Uterus (tissue), 4 donors: ENCODE measurements at regions of chr2 and their contacts with region 1.

Region 1: GRCh38 chr2:55718165-55719008 is 24.7 kb upstream of the PNPT1 start:
- DNase-seq: peak; percentile 39 to 58
- H3K4me3 ChIP-seq: no peak overlapping the region
- H3K27ac ChIP-seq: no peak overlapping the region
- H3K4me1 ChIP-seq: no peaks in the 10 kb centered on the region
- H3K27me3 ChIP-seq: no peaks in the 10 kb centered on the region
- CTCF ChIP-seq: peak; percentile 63 to 79 (median 73)
- POLR2A ChIP-seq: no peak

Region 2: GRCh38 chr2:56009758-56010458 is 291.5 kb after region 1 on chr2:
- intact Hi-C with region 1: loop called (anchors 10 kb)
- DNase-seq: no peak
- H3K4me3 ChIP-seq: no peak overlapping the region
- H3K27ac ChIP-seq: no peak overlapping the region
- H3K4me1 ChIP-seq: peaks cover 0 to 6% of the 10 kb centered on the region in 2 donors
- H3K27me3 ChIP-seq: no peaks in the 10 kb centered on the region
- CTCF ChIP-seq: peak; percentile 46 to 69 (median 59)
- POLR2A ChIP-seq: no peak

Region 3: DNA sequence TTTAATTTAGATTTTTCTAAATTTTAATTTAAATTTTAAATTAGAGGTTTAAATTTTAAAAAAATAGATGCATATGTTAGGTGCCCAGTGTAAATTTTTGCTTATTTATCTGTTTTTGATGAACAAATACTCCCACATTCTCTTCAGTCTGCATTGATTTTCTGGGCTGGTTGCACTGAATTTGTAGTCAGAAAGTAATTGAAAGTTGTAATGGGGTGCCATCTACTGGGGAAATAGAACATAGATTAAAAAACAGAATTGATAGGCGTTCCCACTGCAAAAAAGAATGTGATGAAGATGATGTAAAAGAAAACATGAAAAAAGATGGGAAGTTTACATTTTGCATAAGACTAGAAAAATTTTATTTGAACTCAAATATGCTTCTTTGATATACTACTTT is 413.8 kb after region 1 on chr2:
- intact Hi-C with region 1: loop called (anchors 10 kb)
- DNase-seq: no peak
- H3K4me3 ChIP-seq: no peak overlapping the region
- H3K27ac ChIP-seq: no peak overlapping the region
- H3K4me1 ChIP-seq: no peaks in the 10 kb centered on the region
- H3K27me3 ChIP-seq: no peaks in the 10 kb centered on the region
- CTCF ChIP-seq: peak; percentile 29 to 54 (median 45)
- POLR2A ChIP-seq: no peak

Region 4: GRCh38 chr2:56191683-56192082 is 473.3 kb after region 1 on chr2:
- intact Hi-C with region 1: no loop called
- DNase-seq: no peak
- H3K4me3 ChIP-seq: no peak overlapping the region
- H3K27ac ChIP-seq: no peak overlapping the region
- H3K4me1 ChIP-seq: peaks cover 0 to 3% of the 10 kb centered on the region in 2 donors
- H3K27me3 ChIP-seq: no peaks in the 10 kb centered on the region
- CTCF ChIP-seq: peak in 3 of 4 experiments; percentile 19 to 44 (median 25)
- POLR2A ChIP-seq: no peak